Activated CD8-positive, alpha-beta memory T cell treated with anti-CD3 and anti-CD28 coated beads, Interleukin-2, amount 10 ng/mL, durations not matched to agents 7 days and 5 days (primary cell): ENCODE measurements at regions of chr14 and their contacts with region 1.

Region 1: DNA sequence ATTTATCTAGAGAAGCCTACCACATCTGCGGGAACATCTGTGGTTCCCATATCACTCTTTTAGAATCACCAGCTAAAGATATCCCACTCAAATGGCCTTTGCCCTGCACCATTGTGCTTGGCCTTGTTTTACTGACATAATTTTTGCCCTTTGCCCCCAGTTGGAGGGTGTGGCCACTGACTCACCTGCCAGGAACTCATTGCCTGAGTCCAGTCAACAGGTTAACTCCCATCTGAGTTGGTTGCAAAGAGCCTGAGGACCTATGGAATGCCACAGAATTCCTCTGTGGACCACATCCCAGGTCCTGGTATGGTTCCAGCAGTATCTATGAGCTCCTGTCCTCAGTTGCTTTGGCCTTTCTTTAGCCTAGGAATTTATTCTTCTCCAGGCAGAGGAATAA is 55.7 kb upstream of the PTGR2 start:
- DNase-seq: no peak
- ATAC-seq: no peak
- H3K4me3 Mint-ChIP-seq: no peak overlapping the region
- H3K27ac Mint-ChIP-seq: no peak overlapping the region
- H3K4me1 Mint-ChIP-seq: peaks cover 3% of the 10 kb centered on the region
- H3K27me3 Mint-ChIP-seq: no peaks in the 10 kb centered on the region

Region 2: GRCh38 chr14:73825551-73826188 is 29.7 kb after region 1 on chr14:
- CTCF ChIA-PET with region 1: interaction called, 23 read pairs
- DNase-seq: peak; percentile 86
- ATAC-seq: peak; percentile 70
- H3K4me3 Mint-ChIP-seq: no peak overlapping the region
- H3K27ac Mint-ChIP-seq: no peak overlapping the region
- H3K4me1 Mint-ChIP-seq: peaks cover 37% of the 10 kb centered on the region
- H3K27me3 Mint-ChIP-seq: no peaks in the 10 kb centered on the region

Region 3: GRCh38 chr14:73851644-73852382 is 55.8 kb after region 1 on chr14 and contains the start of gene PTGR2:
- CTCF ChIA-PET with region 1: no interaction called
- DNase-seq: peak; percentile 93
- ATAC-seq: peak; percentile 98
- H3K4me3 Mint-ChIP-seq: peak within 1 kb of the TSS; percentile 95
- H3K27ac Mint-ChIP-seq: peak within 1 kb of the TSS; percentile 99
- H3K4me1 Mint-ChIP-seq: peaks cover 22% of the 10 kb centered on the region
- H3K27me3 Mint-ChIP-seq: peaks cover 5% of the 10 kb centered on the region
- total RNA-seq, gene PTGR2: 1.6 to 3.5 TPM

Region 4: GRCh38 chr14:73886449-73887317 is 90.7 kb after region 1 on chr14 and contains the start of gene ZNF410:
- CTCF ChIA-PET with region 1: no interaction called
- DNase-seq: peak; percentile 92
- ATAC-seq: peak; percentile 99
- H3K4me3 Mint-ChIP-seq: peak within 1 kb of the TSS; percentile 98
- H3K27ac Mint-ChIP-seq: peak within 1 kb of the TSS; percentile 97
- H3K4me1 Mint-ChIP-seq: peaks cover 45% of the 10 kb centered on the region
- H3K27me3 Mint-ChIP-seq: no peaks in the 10 kb centered on the region
- total RNA-seq, gene ZNF410: 55.1 to 58.1 TPM